Left colon (tissue), 2 donors: ENCODE measurements at regions of chr17 and their contacts with region 1.

Region 1: GRCh38 chr17:53932386-53932785 is 109.7 kb downstream of the KIF2B start:
- DNase-seq: no peak
- ATAC-seq: no peak

Region 2: GRCh38 chr17:53996130-53996529 is 63.7 kb after region 1 on chr17:
- intact Hi-C with region 1: loop called in 1 of 2 experiments (anchors 10 kb)
- DNase-seq: no peak
- ATAC-seq: no peak

Region 3: DNA sequence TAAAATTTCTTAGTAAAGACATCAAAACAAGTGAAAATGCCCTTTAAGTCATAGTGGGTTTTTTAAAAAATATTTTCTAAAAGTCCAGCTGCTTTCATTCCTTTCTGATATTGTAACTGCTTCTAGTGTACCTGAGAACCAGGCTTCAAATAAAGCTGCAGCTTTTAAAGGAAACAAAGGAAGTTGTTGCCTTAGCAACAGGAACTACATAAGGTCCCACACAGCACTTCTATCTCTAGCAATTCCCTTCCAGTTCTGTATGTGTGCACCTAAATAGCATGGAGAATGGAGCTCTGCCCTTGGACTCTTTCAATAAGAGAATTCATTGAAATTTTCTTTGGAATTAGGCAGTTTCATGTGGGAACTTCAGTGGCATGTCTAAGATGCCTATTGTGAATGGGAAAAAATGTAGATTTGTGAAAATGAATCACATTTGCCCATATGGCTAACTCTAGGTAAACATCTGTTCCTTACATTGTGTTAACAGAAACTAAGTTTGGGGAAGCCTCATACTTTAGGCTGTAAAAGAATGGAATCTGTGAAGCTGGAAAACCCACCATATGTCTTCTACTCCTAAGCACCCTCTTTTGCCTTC is 96.7 kb after region 1 on chr17:
- intact Hi-C with region 1: no loop called
- DNase-seq: no peak
- ATAC-seq: no peak